Psoas muscle (tissue), 8 donors: ENCODE measurements at regions of chr12 and their contacts with region 1.

Region 1: GRCh38 chr12:25250744-25251730 is at the start of gene KRAS:
- DNase-seq: peak; percentile 97 to 99
- ATAC-seq: peak; percentile 93 to 97 (median 95)
- H3K4me3 ChIP-seq: peak within 1 kb of the TSS; percentile 94
- H3K27ac ChIP-seq: peak within 1 kb of the TSS; percentile 95
- H3K4me1 ChIP-seq: no peaks in the 10 kb centered on the region
- H3K27me3 ChIP-seq: no peaks in the 10 kb centered on the region
- CTCF ChIP-seq: no peak
- total RNA-seq, gene KRAS: 12.3 to 18.0 (median 15.1) TPM

Region 2: DNA sequence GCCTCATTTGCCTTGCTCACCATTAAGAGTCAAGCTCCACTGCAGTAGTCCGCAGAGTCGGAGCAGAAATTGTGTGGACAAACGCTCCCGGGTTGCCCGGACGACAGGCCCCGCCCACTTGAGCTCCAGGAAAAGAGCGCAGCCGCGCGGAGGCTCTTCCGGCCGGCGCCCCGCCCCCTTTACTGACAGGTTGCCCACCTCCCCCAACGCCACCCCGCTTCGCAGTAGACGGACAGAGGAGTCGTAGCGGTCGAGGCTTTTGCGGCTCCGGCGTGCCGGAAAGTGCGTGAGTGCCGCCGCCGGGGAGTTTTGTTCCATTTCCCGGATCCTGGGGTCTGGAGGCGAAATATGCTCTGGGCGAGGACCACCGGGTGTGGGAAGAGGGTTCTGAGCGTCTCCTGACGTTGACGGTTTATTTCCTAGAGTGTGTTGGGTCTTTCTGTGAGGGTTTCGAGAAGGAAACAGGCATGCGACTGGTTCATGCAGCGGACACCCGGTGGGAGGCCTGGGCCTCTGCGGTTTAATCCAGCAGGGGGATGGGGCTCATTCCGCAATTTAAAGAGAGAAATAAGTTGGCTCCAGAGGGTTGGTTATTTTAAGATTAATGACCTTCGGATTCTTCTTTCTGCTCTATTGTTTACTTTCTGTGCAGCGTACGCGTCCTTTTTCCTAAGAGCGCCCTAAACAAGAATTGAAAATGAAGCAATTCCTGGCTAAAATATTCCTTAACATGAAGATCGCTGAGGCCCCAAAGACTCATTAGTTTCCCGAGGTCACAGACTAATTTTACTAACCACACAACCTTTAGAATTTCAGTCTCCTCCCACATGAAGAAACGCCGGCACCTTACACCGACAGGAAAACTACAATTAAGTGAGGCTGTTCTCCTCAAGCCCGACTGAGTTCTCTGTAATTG is 55.7 kb before region 1 on chr12 and contains the starts of genes DNAI7 and ETFRF1:
- intact Hi-C with region 1: loop called in 1 of 2 experiments (anchors 5 kb)
- DNase-seq: peak; percentile 99
- ATAC-seq: peak; percentile 100
- H3K4me3 ChIP-seq: peak within 1 kb of the TSS; percentile 92
- H3K27ac ChIP-seq: peak within 1 kb of the TSS; percentile 95
- H3K4me1 ChIP-seq: peaks cover 26% of the 10 kb centered on the region
- H3K27me3 ChIP-seq: no peaks in the 10 kb centered on the region
- CTCF ChIP-seq: peak; percentile 3
- total RNA-seq, gene DNAI7: 0.26 to 0.74 (median 0.28) TPM in 3 of 4 donors, not detected in the other
- total RNA-seq, gene ETFRF1: 38.9 to 73.0 (median 54.3) TPM

Region 3: GRCh38 chr12:25213338-25213737 is 37.7 kb before region 1 on chr12:
- intact Hi-C with region 1: loop called in 1 of 2 experiments (anchors 5 kb)
- DNase-seq: no peak
- ATAC-seq: no peak
- H3K4me3 ChIP-seq: no peak overlapping the region
- H3K27ac ChIP-seq: no peak overlapping the region
- H3K4me1 ChIP-seq: no peaks in the 10 kb centered on the region
- H3K27me3 ChIP-seq: no peaks in the 10 kb centered on the region
- CTCF ChIP-seq: no peak

Region 4: DNA sequence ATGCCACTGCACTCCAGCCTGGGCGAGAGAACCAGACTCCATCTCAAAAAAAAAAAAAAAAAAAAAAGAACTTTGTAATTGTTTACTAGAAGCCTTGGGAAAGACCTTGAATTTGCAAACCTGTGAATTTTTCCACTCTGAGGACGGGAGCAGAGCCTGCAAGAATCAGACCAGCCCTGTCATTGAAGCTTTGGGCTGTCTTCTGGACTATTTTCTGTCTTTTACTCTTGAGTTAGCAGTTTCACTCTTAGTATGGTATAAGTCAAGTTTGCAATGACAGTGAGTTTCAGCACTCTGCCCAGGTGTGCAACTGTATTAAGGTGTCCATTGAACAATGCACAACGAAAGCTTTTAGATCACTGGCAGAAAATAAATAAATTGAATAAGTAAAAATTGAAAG is 81.1 kb after region 1 on chr12:
- intact Hi-C with region 1: loop called in 1 of 2 experiments (anchors 2 kb)
- DNase-seq: no peak
- ATAC-seq: no peak
- H3K4me3 ChIP-seq: no peak overlapping the region
- H3K27ac ChIP-seq: no peak overlapping the region
- H3K4me1 ChIP-seq: peaks cover 12% of the 10 kb centered on the region
- H3K27me3 ChIP-seq: no peaks in the 10 kb centered on the region
- CTCF ChIP-seq: no peak

Region 5: GRCh38 chr12:25713264-25713663 is 462.2 kb after region 1 on chr12:
- intact Hi-C with region 1: no loop called
- DNase-seq: no peak
- ATAC-seq: no peak
- H3K4me3 ChIP-seq: no peak overlapping the region
- H3K27ac ChIP-seq: no peak overlapping the region
- H3K4me1 ChIP-seq: no peaks in the 10 kb centered on the region
- H3K27me3 ChIP-seq: no peaks in the 10 kb centered on the region
- CTCF ChIP-seq: no peak

Region 6: GRCh38 chr12:25958428-25959070 is 707.5 kb after region 1 on chr12 and contains the start of gene RASSF8:
- intact Hi-C with region 1: loop called in 1 of 2 experiments (anchors 10 kb)
- DNase-seq: peak; percentile 84 to 86
- ATAC-seq: peak; percentile 87 to 92 (median 90)
- H3K4me3 ChIP-seq: peak within 1 kb of the TSS; percentile 74
- H3K27ac ChIP-seq: peak within 1 kb of the TSS; percentile 90
- H3K4me1 ChIP-seq: peaks cover 32% of the 10 kb centered on the region
- H3K27me3 ChIP-seq: no peaks in the 10 kb centered on the region
- CTCF ChIP-seq: no peak
- total RNA-seq, gene RASSF8: 41.9 to 80.3 (median 54.2) TPM